ENCODE measurements at regions of chrX and their contacts with region 1.

Region 1: GRCh38 chrX:48801280-48802088 is at the start of gene HDAC6:
- DNase-seq: peak; percentile 85 to 98 (median 91)
- ATAC-seq: peak; percentile 85
- H3K4me3 ChIP-seq: peak within 1 kb of the TSS; percentile 67 to 89
- H3K4me3 Mint-ChIP-seq: peak within 1 kb of the TSS; percentile 94
- H3K27ac ChIP-seq: peak within 1 kb of the TSS; percentile 92 to 98
- H3K27ac Mint-ChIP-seq: peak within 1 kb of the TSS; percentile 99
- H3K4me1 ChIP-seq: peaks cover 13% of the 10 kb centered on the region
- H3K4me1 Mint-ChIP-seq: peaks cover 17% of the 10 kb centered on the region
- H3K27me3 ChIP-seq: no peaks in the 10 kb centered on the region
- H3K27me3 Mint-ChIP-seq: no peaks in the 10 kb centered on the region
- CTCF ChIP-seq: no peak
- total RNA-seq, gene HDAC6: 73.8 to 80.7 TPM

Region 2: GRCh38 chrX:47796433-47796906 is 1005.0 kb before region 1 on chrX:
- CTCF ChIA-PET with region 1: no interaction called
- POLR2A ChIA-PET with region 1: no interaction called
- intact Hi-C with region 1: no loop called
- DNase-seq: no peak
- ATAC-seq: no peak
- H3K4me3 ChIP-seq: no peak overlapping the region
- H3K4me3 Mint-ChIP-seq: no peak overlapping the region
- H3K27ac ChIP-seq: no peak overlapping the region
- H3K27ac Mint-ChIP-seq: no peak overlapping the region
- H3K4me1 ChIP-seq: no peaks in the 10 kb centered on the region
- H3K4me1 Mint-ChIP-seq: no peaks in the 10 kb centered on the region
- H3K27me3 ChIP-seq: no peaks in the 10 kb centered on the region
- H3K27me3 Mint-ChIP-seq: peaks cover 3% of the 10 kb centered on the region
- CTCF ChIP-seq: no peak

Region 3: DNA sequence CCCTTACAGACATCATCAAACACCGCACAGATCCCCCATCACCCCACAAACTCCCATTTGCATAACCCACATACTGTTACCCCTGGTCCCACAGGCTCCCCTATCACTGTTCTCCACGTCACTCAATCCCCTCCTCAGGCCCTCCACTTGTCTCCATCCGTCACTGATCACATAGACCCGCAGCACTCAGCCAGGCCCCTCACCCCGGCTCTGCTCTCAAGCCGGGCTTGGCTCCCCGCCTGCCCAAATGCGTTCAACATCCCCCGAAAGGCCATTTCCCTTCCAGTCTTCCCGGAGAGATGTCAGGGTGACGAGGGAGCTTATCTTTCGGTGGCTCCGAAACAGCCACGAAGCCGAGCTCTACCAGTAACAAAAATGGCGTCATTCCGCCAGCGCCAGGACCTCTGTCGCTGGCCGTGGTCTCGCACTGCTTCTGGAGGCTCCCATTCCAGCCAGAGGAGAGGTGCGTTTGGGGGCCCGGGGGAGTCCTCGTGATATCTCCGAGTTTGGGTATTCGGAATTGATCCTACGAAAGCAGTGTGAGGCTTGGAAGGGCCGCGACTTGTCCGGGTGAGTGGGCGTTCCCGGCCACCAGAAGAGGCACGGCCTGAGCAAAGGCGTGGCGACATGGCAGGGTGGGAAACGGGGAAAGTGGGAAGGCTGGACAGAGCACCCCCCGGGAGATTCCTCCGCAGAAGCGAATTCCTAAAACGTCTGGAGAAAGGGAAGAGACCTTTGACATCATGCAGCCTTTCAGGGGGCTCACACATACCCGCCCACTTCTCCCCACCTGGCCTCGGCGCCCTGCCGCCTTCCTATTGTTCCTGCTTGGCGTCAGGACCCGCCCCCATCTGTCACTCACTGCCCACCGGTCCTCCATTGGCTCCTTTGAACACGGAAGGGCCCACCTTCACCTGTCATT is 730.2 kb before region 1 on chrX and contains the start of gene ZNF630:
- CTCF ChIA-PET with region 1: no interaction called
- POLR2A ChIA-PET with region 1: no interaction called
- intact Hi-C with region 1: loop called in 1 of 2 experiments (anchors 5 kb)
- DNase-seq: peak; percentile 21 to 78 (median 62)
- ATAC-seq: peak; percentile 85
- H3K4me3 ChIP-seq: peak within 1 kb of the TSS; percentile 84 to 90
- H3K4me3 Mint-ChIP-seq: peak within 1 kb of the TSS; percentile 93
- H3K27ac ChIP-seq: peak within 1 kb of the TSS; percentile 77 to 78
- H3K27ac Mint-ChIP-seq: peak within 1 kb of the TSS; percentile 96
- H3K4me1 ChIP-seq: no peaks in the 10 kb centered on the region
- H3K4me1 Mint-ChIP-seq: peaks cover 20% of the 10 kb centered on the region
- H3K27me3 ChIP-seq: no peaks in the 10 kb centered on the region
- H3K27me3 Mint-ChIP-seq: no peaks in the 10 kb centered on the region
- CTCF ChIP-seq: no peak
- total RNA-seq, gene ZNF630: 1.1 to 1.4 TPM

Region 4: DNA sequence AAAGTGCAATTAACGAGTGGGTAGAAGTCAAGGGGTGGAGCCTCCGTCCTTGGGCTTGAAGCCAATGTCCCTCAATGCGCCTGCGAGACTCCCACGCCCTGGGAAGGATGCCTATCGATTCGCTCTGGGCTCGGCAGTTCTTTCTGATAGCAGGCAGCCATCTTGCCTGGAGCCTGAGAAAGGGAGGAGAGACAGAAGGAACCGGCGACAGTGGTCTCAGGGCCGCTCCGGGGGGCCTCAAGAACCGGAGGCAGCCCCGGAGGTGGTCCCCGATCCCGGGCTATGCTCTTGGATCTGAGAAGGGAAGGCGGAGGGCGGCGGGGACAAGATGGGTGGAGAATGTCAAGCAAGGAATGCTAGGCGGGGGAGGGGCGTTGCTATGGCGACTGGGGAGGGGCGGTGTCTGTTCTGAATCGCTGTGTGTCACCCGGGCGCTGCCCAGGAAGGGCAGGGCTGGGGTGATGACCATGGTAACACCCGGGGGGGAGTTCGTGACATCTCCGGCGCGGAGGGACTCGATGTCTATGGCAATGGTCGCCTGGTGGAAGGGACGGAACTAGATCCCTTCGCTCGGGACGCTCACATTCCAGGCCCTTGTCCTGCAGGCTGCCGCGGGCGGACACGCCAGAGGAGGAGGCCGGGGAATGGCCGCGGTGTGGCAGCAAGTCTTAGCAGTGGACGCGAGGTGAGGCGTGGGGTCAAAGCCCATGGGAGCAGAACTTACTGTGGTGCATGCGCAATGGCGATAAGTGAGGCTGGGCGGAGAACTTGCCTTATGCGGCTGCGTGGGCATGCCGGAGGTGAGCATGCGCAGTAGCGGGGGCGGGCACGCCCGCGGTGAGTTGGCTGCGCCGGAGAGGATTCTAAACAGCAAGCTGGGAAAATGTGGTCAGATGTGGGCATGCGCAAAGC is 203.9 kb before region 1 on chrX and contains the start of gene WDR13:
- CTCF ChIA-PET with region 1: no interaction called
- POLR2A ChIA-PET with region 1: no interaction called
- intact Hi-C with region 1: loop called in 1 of 2 experiments (anchors 5 kb)
- DNase-seq: peak; percentile 79 to 94 (median 90)
- ATAC-seq: peak; percentile 82
- H3K4me3 ChIP-seq: peak within 1 kb of the TSS; percentile 90 to 99
- H3K4me3 Mint-ChIP-seq: peak within 1 kb of the TSS; percentile 94
- H3K27ac ChIP-seq: peak within 1 kb of the TSS; percentile 100
- H3K27ac Mint-ChIP-seq: peak within 1 kb of the TSS; percentile 100
- H3K4me1 ChIP-seq: peaks cover 7% of the 10 kb centered on the region
- H3K4me1 Mint-ChIP-seq: peaks cover 10% of the 10 kb centered on the region
- H3K27me3 ChIP-seq: no peaks in the 10 kb centered on the region
- H3K27me3 Mint-ChIP-seq: no peaks in the 10 kb centered on the region
- CTCF ChIP-seq: no peak
- total RNA-seq, gene WDR13: 41.6 to 51.6 TPM

Region 5: GRCh38 chrX:48714573-48714972 is 86.9 kb before region 1 on chrX:
- CTCF ChIA-PET with region 1: no interaction called
- POLR2A ChIA-PET with region 1: interaction called, 11 read pairs
- intact Hi-C with region 1: no loop called
- DNase-seq: peak in 2 of 9 experiments; percentile 40 to 62
- ATAC-seq: peak; percentile 34
- H3K4me3 ChIP-seq: peak overlapping the region in 1 of 2 experiments; percentile 35
- H3K4me3 Mint-ChIP-seq: peak overlapping the region; percentile 2
- H3K27ac ChIP-seq: peak overlapping the region; percentile 75 to 76
- H3K27ac Mint-ChIP-seq: peak overlapping the region; percentile 92
- H3K4me1 ChIP-seq: peaks cover 78% of the 10 kb centered on the region
- H3K4me1 Mint-ChIP-seq: peaks cover 83% of the 10 kb centered on the region
- H3K27me3 ChIP-seq: no peaks in the 10 kb centered on the region
- H3K27me3 Mint-ChIP-seq: no peaks in the 10 kb centered on the region
- CTCF ChIP-seq: no peak

Region 6: GRCh38 chrX:48897621-48898306 is 96.3 kb after region 1 on chrX and contains the starts of genes PQBP1 and TIMM17B:
- CTCF ChIA-PET with region 1: no interaction called
- POLR2A ChIA-PET with region 1: interaction called, 6 read pairs
- intact Hi-C with region 1: loop called in 1 of 2 experiments (anchors 10 kb)
- DNase-seq: peak; percentile 72 to 96 (median 84)
- ATAC-seq: peak; percentile 86
- H3K4me3 ChIP-seq: peak within 1 kb of the TSS; percentile 87 to 98
- H3K4me3 Mint-ChIP-seq: peak within 1 kb of the TSS; percentile 88
- H3K27ac ChIP-seq: peak within 1 kb of the TSS; percentile 98
- H3K27ac Mint-ChIP-seq: peak within 1 kb of the TSS; percentile 95
- H3K4me1 ChIP-seq: peaks cover 21% of the 10 kb centered on the region
- H3K4me1 Mint-ChIP-seq: peaks cover 29% of the 10 kb centered on the region
- H3K27me3 ChIP-seq: no peaks in the 10 kb centered on the region
- H3K27me3 Mint-ChIP-seq: no peaks in the 10 kb centered on the region
- CTCF ChIP-seq: no peak
- total RNA-seq, gene PQBP1: 79.9 to 82.1 TPM
- total RNA-seq, gene TIMM17B: 35.0 to 37.6 TPM

Region 7: DNA sequence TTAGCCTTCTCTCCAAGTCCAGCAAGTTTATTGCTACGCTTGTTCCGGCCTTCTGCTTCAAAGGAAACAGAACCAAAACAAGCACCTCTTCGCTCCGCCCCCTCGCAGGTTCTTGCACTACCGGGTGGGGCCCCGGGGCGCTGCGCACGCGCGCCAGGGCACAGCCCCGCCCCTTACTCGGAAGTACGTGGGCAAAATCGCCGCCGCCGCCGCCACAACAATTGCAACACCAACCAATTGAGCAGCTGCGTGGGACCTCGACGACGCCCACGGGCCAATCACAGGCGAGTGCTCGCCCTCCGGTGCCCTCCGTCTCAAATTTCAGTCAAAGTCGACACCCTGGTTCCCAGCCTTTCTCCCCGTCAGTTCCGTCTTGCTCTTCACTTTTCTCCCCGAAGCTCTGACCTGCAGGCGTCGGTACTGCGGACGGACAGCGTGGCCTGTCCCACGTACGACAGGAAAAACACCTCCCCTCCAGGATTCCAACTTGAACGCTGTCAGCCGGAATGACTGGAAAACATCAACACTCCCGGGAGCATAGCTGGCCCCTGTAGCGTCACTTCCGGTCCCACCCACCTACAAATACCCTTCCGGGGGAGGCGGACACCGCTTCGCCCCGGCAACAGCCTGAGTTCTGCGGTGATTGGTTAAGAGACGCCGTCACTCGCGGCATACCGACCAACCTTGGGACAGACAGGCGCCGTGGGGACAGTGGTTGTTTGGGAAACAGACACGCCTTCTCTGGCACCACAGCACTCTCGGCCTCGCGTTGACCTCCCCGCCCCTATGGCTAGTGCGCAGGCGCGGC is 156.5 kb after region 1 on chrX:
- CTCF ChIA-PET with region 1: no interaction called
- POLR2A ChIA-PET with region 1: no interaction called
- intact Hi-C with region 1: loop called (anchors 1 to 5 kb)
- DNase-seq: peak; percentile 83 to 98 (median 91)
- ATAC-seq: peak; percentile 76
- H3K4me3 ChIP-seq: peak overlapping the region; percentile 75 to 94
- H3K4me3 Mint-ChIP-seq: peak overlapping the region; percentile 99
- H3K27ac ChIP-seq: peak overlapping the region; percentile 100
- H3K27ac Mint-ChIP-seq: peak overlapping the region; percentile 100
- H3K4me1 ChIP-seq: peaks cover 44% of the 10 kb centered on the region
- H3K4me1 Mint-ChIP-seq: peaks cover 39% of the 10 kb centered on the region
- H3K27me3 ChIP-seq: no peaks in the 10 kb centered on the region
- H3K27me3 Mint-ChIP-seq: no peaks in the 10 kb centered on the region
- CTCF ChIP-seq: no peak

Region 8: DNA sequence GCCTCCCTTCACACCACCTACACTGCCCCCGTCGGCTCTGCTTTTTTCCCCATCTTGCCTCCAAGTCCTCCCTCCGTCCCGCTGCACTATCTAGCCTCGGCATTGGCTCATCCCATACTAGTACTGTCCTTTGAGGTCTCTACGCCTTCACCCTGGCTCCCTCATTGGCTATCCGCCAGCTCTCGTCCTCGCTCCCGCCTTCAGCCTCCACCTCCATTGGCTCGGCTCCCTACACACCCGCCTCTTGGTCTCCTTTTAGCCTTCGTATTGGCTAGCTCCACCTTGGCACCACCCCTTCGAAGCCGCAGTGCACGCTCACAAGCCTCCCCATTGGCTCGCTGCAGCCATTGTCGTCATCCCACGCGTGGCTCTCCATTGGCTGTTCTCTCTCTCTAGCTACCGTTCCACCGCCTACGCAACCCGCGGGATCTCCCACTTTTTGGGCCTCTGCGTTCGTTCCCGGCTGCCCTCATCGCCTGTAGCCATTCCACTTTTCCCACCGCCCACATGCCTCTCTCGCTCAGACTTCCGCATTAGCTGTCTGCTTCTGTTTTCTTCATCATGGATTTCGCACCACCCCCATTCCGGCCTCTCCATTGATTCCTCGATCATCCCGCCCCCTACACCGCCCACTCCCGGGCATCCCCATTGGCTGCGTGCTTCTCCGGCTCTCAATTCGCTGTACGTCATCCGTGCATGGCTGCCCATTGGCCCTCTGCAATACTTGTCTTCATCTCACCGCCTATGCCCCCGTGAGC is 467.7 kb after region 1 on chrX:
- CTCF ChIA-PET with region 1: no interaction called
- POLR2A ChIA-PET with region 1: no interaction called
- intact Hi-C with region 1: loop called in 1 of 2 experiments (anchors 5 kb)
- DNase-seq: peak; percentile 84 to 98 (median 91)
- ATAC-seq: peak; percentile 84
- H3K4me3 ChIP-seq: peak overlapping the region; percentile 71 to 84
- H3K4me3 Mint-ChIP-seq: peak overlapping the region; percentile 94
- H3K27ac ChIP-seq: peak overlapping the region; percentile 100
- H3K27ac Mint-ChIP-seq: peak overlapping the region; percentile 100
- H3K4me1 ChIP-seq: peaks cover 44% of the 10 kb centered on the region
- H3K4me1 Mint-ChIP-seq: peaks cover 50% of the 10 kb centered on the region
- H3K27me3 ChIP-seq: no peaks in the 10 kb centered on the region
- H3K27me3 Mint-ChIP-seq: no peaks in the 10 kb centered on the region
- CTCF ChIP-seq: no peak